ENCODE measurements at regions of chr3 and their contacts with region 1.

Region 1: GRCh38 chr3:113838631-113839209 is at the start of gene GRAMD1C:
- DNase-seq: peak; percentile 95
- total RNA-seq, gene GRAMD1C: 0.70 TPM

Region 2: GRCh38 chr3:113802795-113803455 is 35.8 kb before region 1 on chr3:
- intact Hi-C with region 1: no loop called
- DNase-seq: no peak

Region 3: GRCh38 chr3:113912552-113913236 is 74.0 kb after region 1 on chr3:
- intact Hi-C with region 1: loop called (anchors 5 kb)
- DNase-seq: no peak

Region 4: DNA sequence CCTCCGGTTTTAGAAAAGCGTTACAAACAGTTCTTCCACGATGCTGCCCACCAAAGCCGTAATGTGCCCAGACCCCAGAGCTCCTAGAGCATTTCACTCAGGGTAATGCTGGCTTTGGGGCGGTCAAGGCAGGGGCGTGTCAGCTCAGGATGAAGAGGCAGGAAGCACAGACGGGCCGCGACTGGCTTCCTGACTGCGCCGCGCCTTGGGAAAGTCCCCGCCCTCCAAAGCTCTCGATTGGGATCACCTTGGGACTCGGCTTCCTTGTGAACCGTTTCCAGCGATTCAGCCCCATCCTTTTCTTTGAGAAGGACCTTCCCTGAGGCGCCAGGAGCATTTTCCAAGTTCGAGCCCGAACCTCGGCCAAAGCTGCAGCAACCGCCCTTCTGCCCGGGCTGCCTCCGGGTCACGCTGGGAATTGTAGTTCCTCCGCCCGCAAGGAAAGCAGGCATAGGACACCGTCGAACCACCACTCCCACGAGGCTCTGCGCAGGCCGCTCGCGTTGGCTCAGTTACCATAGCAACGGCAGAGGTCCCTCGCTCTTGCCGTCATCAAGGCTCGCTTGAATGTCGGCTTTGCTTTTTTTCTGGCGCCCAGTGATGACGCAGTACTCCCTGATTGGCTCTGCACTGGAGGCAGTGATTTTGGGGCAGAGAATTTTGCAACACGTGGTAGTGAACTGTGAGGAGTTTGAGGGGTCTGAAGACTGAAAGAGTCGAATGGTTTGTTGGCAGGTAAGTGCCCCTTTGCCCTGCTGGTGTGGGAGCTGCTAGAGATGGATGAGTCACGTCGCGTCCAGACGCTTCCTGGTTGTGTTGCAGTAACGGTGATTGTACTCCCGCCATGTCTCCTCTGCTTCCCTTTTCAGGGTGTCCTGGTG is 217.7 kb after region 1 on chr3 and contains the starts of genes CCDC191 and QTRT2:
- intact Hi-C with region 1: loop called (anchors 10 kb)
- DNase-seq: peak; percentile 100
- total RNA-seq, gene CCDC191: 1.2 TPM
- total RNA-seq, gene QTRT2: 6.5 TPM

Region 5: DNA sequence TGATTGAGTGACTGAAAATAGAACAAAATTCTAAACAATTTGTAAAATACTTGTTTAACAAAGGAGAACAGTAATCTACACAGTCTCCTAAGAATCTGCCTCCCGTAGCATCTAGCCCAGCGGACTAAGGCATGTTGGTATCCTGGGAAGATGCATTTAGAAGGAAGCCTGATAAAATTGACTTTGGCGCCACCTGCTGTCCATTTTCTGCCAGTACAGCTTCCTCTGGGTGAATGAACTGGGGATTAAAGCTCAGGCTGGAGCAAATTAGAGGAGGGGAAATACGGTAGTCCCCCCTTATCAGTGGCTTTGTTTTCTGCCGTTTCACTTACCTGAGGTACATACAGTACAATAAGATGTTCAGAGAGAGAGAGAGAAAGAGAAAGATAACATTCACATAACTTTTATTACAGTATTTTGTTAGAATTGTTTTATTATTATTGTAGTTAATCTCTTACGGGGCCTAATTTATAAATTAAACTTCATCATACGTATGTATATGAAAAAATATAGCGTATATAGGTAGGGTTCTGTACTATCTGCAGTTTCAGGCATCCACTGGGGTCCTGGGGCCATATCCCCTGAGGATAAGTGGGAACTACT is 1976.2 kb after region 1 on chr3:
- intact Hi-C with region 1: loop called (anchors 5 kb)
- DNase-seq: peak; percentile 78

Measured in cardiac septum (tissue), 1 donor.